ENCODE measurements at regions of chr14 and their contacts with region 1.

Region 1: GRCh38 chr14:73426877-73427276 is 31.5 kb downstream of the NUMB start:
- DNase-seq: no peak
- ATAC-seq: no peak
- H3K4me3 Mint-ChIP-seq: no peak overlapping the region
- H3K27ac Mint-ChIP-seq: peak overlapping the region; percentile 76
- H3K4me1 Mint-ChIP-seq: peaks cover 62% of the 10 kb centered on the region
- H3K27me3 Mint-ChIP-seq: no peaks in the 10 kb centered on the region
- CTCF ChIP-seq: no peak

Region 2: GRCh38 chr14:73403181-73403752 is 23.6 kb before region 1 on chr14:
- CTCF ChIA-PET with region 1: interaction called, 4 read pairs
- POLR2A ChIA-PET with region 1: interaction called, 13 read pairs
- intact Hi-C with region 1: no loop called
- DNase-seq: no peak
- ATAC-seq: no peak
- H3K4me3 Mint-ChIP-seq: no peak overlapping the region
- H3K27ac Mint-ChIP-seq: peak overlapping the region; percentile 88
- H3K4me1 Mint-ChIP-seq: peaks cover 57% of the 10 kb centered on the region
- H3K27me3 Mint-ChIP-seq: no peaks in the 10 kb centered on the region
- CTCF ChIP-seq: no peak

Region 3: GRCh38 chr14:73443758-73444157 is 16.9 kb after region 1 on chr14:
- CTCF ChIA-PET with region 1: no interaction called
- POLR2A ChIA-PET with region 1: interaction called, 4 read pairs
- intact Hi-C with region 1: loop called (anchors 2 kb)
- DNase-seq: no peak
- ATAC-seq: no peak
- H3K4me3 Mint-ChIP-seq: no peak overlapping the region
- H3K27ac Mint-ChIP-seq: no peak overlapping the region
- H3K4me1 Mint-ChIP-seq: peaks cover 12% of the 10 kb centered on the region
- H3K27me3 Mint-ChIP-seq: no peaks in the 10 kb centered on the region
- CTCF ChIP-seq: no peak

Measured in activated B cell treated with CpG ODN at 0.5 μM for 24 hours (primary cell).